Dendritic cell treated with granulocyte-macrophage colony-stimulating factor and Interleukin-4, amounts not matched to agents 40 ng/mL and 50 ng/mL, for 4 days (primary cell): ENCODE measurements at regions of chr4 and their contacts with region 1.

Region 1: GRCh38 chr4:37603070-37603468 is 83.1 kb downstream of the RELL1 start:
- H3K4me3 Mint-ChIP-seq: peak overlapping the region; percentile 37
- H3K27ac Mint-ChIP-seq: peak overlapping the region; percentile 22
- H3K4me1 Mint-ChIP-seq: peaks cover 58% of the 10 kb centered on the region
- H3K27me3 Mint-ChIP-seq: no peaks in the 10 kb centered on the region

Region 2: GRCh38 chr4:37338983-37339382 is 264.1 kb before region 1 on chr4:
- intact Hi-C with region 1: no loop called
- H3K4me3 Mint-ChIP-seq: no peak overlapping the region
- H3K27ac Mint-ChIP-seq: no peak overlapping the region
- H3K4me1 Mint-ChIP-seq: no peaks in the 10 kb centered on the region
- H3K27me3 Mint-ChIP-seq: no peaks in the 10 kb centered on the region

Region 3: GRCh38 chr4:37686373-37687193 is 83.5 kb after region 1 on chr4 and contains the start of gene RELL1:
- intact Hi-C with region 1: loop called (anchors 10 kb)
- H3K4me3 Mint-ChIP-seq: peak within 1 kb of the TSS; percentile 86
- H3K27ac Mint-ChIP-seq: peak within 1 kb of the TSS; percentile 90
- H3K4me1 Mint-ChIP-seq: peaks cover 40% of the 10 kb centered on the region
- H3K27me3 Mint-ChIP-seq: no peaks in the 10 kb centered on the region

Region 4: DNA sequence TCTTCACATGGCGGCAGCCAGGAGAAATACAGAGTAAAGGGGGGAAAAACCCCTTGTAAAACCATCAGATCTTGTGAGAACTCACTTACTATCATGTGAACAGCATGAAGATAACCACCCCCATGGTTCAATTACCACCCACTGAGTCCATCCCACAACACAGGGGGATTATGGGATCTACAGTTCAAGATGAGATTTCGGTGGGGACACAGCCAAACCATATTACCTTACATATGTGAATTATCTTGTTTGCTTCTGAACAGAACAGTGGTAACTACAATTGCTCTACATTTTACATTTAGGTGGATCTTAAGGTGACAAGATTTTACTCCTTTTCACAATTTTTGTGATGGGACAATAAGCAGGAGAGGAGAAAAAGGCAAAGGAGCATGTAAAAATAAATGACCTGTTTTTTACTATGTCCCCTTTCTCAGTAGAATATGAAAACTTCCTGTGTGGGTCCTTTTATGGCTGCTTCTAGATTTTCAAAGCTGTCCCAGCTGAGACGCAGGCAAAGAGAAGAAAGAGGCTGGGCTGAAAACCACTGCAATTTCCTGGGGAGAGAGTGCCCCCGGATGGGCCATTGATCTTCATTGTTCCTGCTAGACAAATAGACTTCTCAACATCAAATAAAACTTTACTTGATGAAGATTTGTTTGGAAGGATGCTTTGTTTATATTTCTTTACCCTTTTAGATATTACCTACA is 177.5 kb after region 1 on chr4:
- intact Hi-C with region 1: loop called (anchors 5 kb)
- H3K4me3 Mint-ChIP-seq: no peak overlapping the region
- H3K27ac Mint-ChIP-seq: no peak overlapping the region
- H3K4me1 Mint-ChIP-seq: peaks cover 12% of the 10 kb centered on the region
- H3K27me3 Mint-ChIP-seq: no peaks in the 10 kb centered on the region

Region 5: GRCh38 chr4:38034986-38035882 is 432.2 kb after region 1 on chr4:
- intact Hi-C with region 1: loop called (anchors 5 kb)
- H3K4me3 Mint-ChIP-seq: no peak overlapping the region
- H3K27ac Mint-ChIP-seq: no peak overlapping the region
- H3K4me1 Mint-ChIP-seq: peaks cover 2% of the 10 kb centered on the region
- H3K27me3 Mint-ChIP-seq: no peaks in the 10 kb centered on the region